Aorta (tissue), 5 donors: ENCODE measurements at regions of chr6 and their contacts with region 1.

Region 1: DNA sequence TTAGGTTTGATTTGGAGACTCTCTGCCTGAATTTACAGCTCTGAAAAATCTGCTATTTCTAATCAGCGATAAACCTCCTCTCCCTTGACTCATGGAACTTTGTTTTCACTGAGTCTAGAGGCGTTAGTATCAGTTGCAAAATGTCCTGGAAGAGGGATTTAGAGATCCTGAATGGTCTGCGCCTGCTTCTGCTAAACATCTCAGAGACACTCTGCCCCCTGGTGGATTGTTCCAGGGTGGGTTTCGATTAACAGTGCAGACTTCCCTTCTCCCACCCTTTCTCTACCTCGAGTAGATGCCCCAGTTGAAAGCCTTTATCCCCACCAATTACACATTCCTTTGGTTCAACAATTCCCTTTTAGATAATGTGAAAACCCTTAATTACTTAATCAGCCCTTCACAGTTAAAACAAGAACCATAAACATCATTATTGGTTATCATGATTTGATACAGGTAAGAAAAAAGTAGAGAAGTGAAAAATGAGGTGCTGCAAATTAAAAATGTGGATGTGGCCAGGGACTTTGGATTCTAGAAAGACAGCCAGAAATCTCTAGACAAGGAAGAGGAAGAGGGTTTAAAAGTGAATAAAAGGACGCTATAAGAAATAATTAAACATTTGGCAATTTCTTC is 5.5 kb downstream of the HTR1B start:
- DNase-seq: peak; percentile 76 to 87
- ATAC-seq: peak; percentile 91
- H3K4me3 ChIP-seq: no peak overlapping the region
- H3K27ac ChIP-seq: no peak overlapping the region
- H3K4me1 ChIP-seq: peaks cover 2 to 5% of the 10 kb centered on the region in 2 donors
- H3K27me3 ChIP-seq: no peaks in the 10 kb centered on the region

Region 2: GRCh38 chr6:77143659-77144447 is 314.0 kb before region 1 on chr6:
- intact Hi-C with region 1: loop called in 1 of 2 experiments (anchors 5 kb)
- DNase-seq: no peak
- ATAC-seq: no peak
- H3K4me3 ChIP-seq: no peak overlapping the region
- H3K27ac ChIP-seq: no peak overlapping the region
- H3K4me1 ChIP-seq: no peaks in the 10 kb centered on the region
- H3K27me3 ChIP-seq: no peaks in the 10 kb centered on the region

Region 3: GRCh38 chr6:77292564-77293546 is 165.0 kb before region 1 on chr6:
- intact Hi-C with region 1: loop called (anchors 5 to 10 kb)
- DNase-seq: no peak
- ATAC-seq: no peak
- H3K4me3 ChIP-seq: no peak overlapping the region
- H3K27ac ChIP-seq: peak overlapping the region in 1 of 2 donors; percentile 78
- H3K4me1 ChIP-seq: no peaks in the 10 kb centered on the region
- H3K27me3 ChIP-seq: no peaks in the 10 kb centered on the region

Region 4: GRCh38 chr6:77324866-77325265 is 133.0 kb before region 1 on chr6:
- intact Hi-C with region 1: loop called in 1 of 2 experiments (anchors 10 kb)
- DNase-seq: no peak
- ATAC-seq: peak; percentile 91
- H3K4me3 ChIP-seq: no peak overlapping the region
- H3K27ac ChIP-seq: no peak overlapping the region
- H3K4me1 ChIP-seq: no peaks in the 10 kb centered on the region
- H3K27me3 ChIP-seq: no peaks in the 10 kb centered on the region

Region 5: DNA sequence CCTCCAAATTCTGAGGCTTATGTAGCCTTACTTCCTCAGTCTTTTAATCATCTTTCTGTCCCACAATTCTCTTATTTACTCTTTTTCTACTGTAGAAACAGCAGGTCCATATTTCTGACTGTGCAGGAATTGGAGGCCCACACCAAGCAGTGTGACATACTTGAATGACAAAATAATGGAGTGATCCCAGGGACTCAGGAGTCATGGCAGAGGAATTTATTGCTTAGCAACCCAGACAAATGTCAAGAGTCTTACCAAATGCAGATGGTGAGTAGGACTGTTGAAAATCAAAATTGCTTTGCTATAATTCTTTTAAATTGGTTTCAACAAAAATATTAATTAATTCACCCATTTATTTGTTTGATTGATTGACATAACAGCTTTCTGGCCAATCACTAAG is 54.4 kb before region 1 on chr6:
- intact Hi-C with region 1: loop called in 1 of 2 experiments (anchors 10 kb)
- DNase-seq: no peak
- ATAC-seq: no peak
- H3K4me3 ChIP-seq: no peak overlapping the region
- H3K27ac ChIP-seq: no peak overlapping the region
- H3K4me1 ChIP-seq: no peaks in the 10 kb centered on the region
- H3K27me3 ChIP-seq: no peaks in the 10 kb centered on the region

Region 6: DNA sequence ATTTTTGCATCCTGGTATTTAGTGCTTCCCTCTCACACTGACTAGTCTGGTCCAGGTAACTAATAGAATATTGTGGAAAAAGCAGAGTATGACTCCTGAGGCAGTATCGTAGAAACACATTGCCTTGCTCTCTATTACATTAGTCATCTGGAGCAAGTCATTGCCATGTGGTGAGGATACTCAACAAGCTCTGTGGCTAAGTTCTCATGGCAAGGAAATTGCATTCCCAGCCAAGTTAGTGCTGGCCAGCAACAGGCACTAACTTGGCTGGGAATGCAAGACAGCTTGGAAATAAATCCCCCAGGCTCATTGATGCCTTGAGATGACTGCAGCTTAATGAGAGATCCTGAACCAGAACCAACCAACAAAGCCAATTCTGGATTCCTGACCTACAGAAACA is 45.1 kb after region 1 on chr6:
- intact Hi-C with region 1: no loop called
- DNase-seq: no peak
- ATAC-seq: no peak
- H3K4me3 ChIP-seq: no peak overlapping the region
- H3K27ac ChIP-seq: no peak overlapping the region
- H3K4me1 ChIP-seq: no peaks in the 10 kb centered on the region
- H3K27me3 ChIP-seq: no peaks in the 10 kb centered on the region